GM13976 (cell line): ENCODE measurements at regions of chrX and their contacts with region 1.

Region 1: GRCh38 chrX:20442597-20442996 is 175.9 kb upstream of the RPS6KA3 start:
- DNase-seq: peak; percentile 14
- CTCF ChIP-seq: peak; percentile 29

Region 2: DNA sequence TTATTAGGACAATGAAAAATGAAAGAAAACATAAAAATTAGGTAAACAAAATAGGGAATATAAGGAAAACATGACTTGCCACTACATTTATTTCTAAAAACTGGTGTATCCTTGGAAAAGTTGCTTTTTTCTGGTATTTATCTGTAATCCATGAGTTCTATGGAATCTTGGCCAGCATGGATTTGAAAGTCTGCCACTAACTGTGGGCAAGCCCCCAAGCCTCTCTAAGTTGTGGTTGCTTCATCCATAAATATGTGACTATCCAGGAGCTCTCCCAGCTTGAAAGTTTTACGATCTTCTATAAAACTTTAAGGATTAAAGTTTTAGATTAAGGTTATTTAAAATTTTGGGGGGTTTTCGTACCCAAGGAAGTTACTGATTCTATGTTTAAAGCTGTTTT is 197.7 kb before region 1 on chrX:
- in situ Hi-C with region 1: loop called (anchors 10 kb)
- DNase-seq: no peak
- CTCF ChIP-seq: no peak

Region 3: GRCh38 chrX:20542072-20542471 is 99.5 kb after region 1 on chrX:
- in situ Hi-C with region 1: no loop called
- DNase-seq: no peak
- CTCF ChIP-seq: no peak

Region 4: GRCh38 chrX:20637351-20637750 is 194.8 kb after region 1 on chrX:
- in situ Hi-C with region 1: no loop called
- DNase-seq: no peak
- CTCF ChIP-seq: no peak

Region 5: GRCh38 chrX:20829665-20830491 is 387.3 kb after region 1 on chrX:
- in situ Hi-C with region 1: no loop called
- DNase-seq: no peak
- CTCF ChIP-seq: no peak